Caco-2 (cell line): ENCODE measurements at regions of chr12 and their contacts with region 1.

Region 1: GRCh38 chr12:17928708-17929366 is 161.2 kb downstream of the RERGL start:
- DNase-seq: peak; percentile 33 to 61
- H3K4me3 ChIP-seq: no peak overlapping the region
- H3K4me3 Mint-ChIP-seq: peak overlapping the region; percentile 40
- H3K27ac Mint-ChIP-seq: peak overlapping the region; percentile 41
- H3K4me1 ChIP-seq: peaks cover 18% of the 10 kb centered on the region
- H3K4me1 Mint-ChIP-seq: peaks cover 7% of the 10 kb centered on the region
- H3K27me3 ChIP-seq: no peaks in the 10 kb centered on the region
- H3K27me3 Mint-ChIP-seq: no peaks in the 10 kb centered on the region
- CTCF ChIP-seq: peak; percentile 41 to 47

Region 2: DNA sequence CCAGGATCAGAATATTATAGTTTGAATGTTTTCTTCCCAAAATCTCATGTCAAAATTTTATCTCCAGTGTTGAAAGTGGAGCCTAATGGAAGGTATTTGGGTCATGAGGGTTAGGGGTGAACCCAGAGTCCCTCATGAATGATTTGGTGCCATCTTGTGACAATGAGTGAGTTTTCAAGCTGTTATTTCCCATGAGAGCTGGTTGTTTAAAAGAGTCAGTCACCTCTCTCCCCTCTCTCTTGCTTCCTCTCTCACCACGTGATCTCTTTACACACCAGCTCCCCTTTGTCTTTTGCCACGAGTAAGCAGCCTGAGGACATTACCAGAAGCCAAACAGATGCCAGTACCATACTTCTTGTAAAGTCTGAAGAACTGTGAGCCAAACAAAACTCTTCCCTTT is 400.4 kb before region 1 on chr12:
- CTCF ChIA-PET with region 1: no interaction called
- POLR2A ChIA-PET with region 1: no interaction called
- intact Hi-C with region 1: loop called (anchors 5 kb)
- DNase-seq: no peak
- H3K4me3 ChIP-seq: no peak overlapping the region
- H3K4me3 Mint-ChIP-seq: no peak overlapping the region
- H3K27ac Mint-ChIP-seq: no peak overlapping the region
- H3K4me1 ChIP-seq: no peaks in the 10 kb centered on the region
- H3K4me1 Mint-ChIP-seq: no peaks in the 10 kb centered on the region
- H3K27me3 ChIP-seq: no peaks in the 10 kb centered on the region
- H3K27me3 Mint-ChIP-seq: peaks cover under 1% of the 10 kb centered on the region
- CTCF ChIP-seq: no peak

Region 3: DNA sequence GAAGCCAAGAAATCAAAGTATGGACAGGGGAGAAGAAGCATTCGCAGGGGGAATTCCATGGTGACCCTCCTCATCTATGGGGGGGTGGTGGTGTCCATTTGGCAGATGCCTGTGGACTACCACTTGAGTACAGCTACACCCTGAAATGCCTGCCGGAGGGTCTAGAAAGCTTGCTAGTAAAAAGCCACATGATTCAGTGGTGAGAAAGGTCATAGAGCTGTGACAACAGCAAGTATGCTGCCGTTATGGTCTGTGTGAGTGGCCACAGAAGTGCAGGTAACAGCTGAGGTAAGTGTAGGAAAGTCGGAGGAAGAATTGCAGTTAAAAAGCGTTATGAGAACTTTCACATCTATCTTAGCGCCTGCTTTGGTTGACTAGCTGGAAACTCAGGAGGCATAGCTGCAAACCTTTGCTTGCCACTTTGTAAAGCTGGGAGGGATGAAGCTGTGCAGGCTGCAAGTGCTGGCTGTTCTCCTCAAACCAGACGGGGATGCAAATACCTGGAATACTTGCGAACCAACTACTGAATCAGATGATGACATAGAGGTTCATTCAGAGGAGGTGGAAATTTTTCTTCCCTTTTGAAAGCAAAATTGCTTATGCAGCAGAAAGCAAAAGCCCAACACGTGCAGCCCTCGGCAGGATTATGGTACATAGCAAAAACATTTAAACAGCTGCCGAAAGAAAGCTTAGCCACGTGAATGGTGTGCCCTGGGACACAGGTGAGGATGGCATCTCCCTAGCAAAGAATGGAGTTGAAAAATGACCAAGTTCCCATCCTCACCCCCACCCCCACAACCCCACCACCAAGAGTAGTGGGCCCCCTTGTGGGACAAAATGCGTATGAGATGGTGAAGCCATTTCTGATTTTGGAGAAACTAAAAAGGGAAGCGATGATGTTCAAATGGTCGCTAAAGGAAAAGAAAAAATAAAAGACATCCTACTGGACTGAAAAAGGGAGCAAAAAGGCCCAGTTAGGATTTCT is 125.9 kb before region 1 on chr12:
- CTCF ChIA-PET with region 1: no interaction called
- POLR2A ChIA-PET with region 1: no interaction called
- intact Hi-C with region 1: loop called (anchors 5 kb)
- DNase-seq: peak; percentile 16 to 24
- H3K4me3 ChIP-seq: no peak overlapping the region
- H3K4me3 Mint-ChIP-seq: no peak overlapping the region
- H3K27ac Mint-ChIP-seq: no peak overlapping the region
- H3K4me1 ChIP-seq: no peaks in the 10 kb centered on the region
- H3K4me1 Mint-ChIP-seq: no peaks in the 10 kb centered on the region
- H3K27me3 ChIP-seq: no peaks in the 10 kb centered on the region
- H3K27me3 Mint-ChIP-seq: no peaks in the 10 kb centered on the region
- CTCF ChIP-seq: no peak

Region 4: GRCh38 chr12:17866802-17867201 is 62.0 kb before region 1 on chr12:
- CTCF ChIA-PET with region 1: no interaction called
- POLR2A ChIA-PET with region 1: no interaction called
- intact Hi-C with region 1: no loop called
- DNase-seq: no peak
- H3K4me3 ChIP-seq: no peak overlapping the region
- H3K4me3 Mint-ChIP-seq: no peak overlapping the region
- H3K27ac Mint-ChIP-seq: no peak overlapping the region
- H3K4me1 ChIP-seq: no peaks in the 10 kb centered on the region
- H3K4me1 Mint-ChIP-seq: no peaks in the 10 kb centered on the region
- H3K27me3 ChIP-seq: no peaks in the 10 kb centered on the region
- H3K27me3 Mint-ChIP-seq: peaks cover 10% of the 10 kb centered on the region
- CTCF ChIP-seq: no peak

Region 5: DNA sequence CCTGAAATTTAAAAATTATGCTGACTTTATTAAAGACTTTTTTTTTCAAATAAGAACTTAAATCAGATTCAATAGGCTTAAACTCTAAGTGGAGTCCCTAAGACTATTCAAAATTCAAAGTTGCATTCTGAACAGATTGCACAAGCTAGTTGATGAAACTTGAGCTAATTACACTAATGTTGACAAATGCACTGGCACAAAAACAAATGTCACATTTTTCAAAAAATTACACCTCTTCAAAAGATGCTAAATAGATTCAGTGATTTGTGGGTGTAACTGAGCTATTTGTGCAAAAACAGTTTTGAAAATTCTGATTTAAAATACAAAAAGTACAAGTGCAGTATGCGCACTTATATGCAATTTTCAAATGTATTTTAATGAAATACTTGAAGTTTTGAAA is 44.3 kb before region 1 on chr12:
- CTCF ChIA-PET with region 1: no interaction called
- POLR2A ChIA-PET with region 1: no interaction called
- intact Hi-C with region 1: no loop called
- DNase-seq: no peak
- H3K4me3 ChIP-seq: no peak overlapping the region
- H3K4me3 Mint-ChIP-seq: no peak overlapping the region
- H3K27ac Mint-ChIP-seq: no peak overlapping the region
- H3K4me1 ChIP-seq: no peaks in the 10 kb centered on the region
- H3K4me1 Mint-ChIP-seq: no peaks in the 10 kb centered on the region
- H3K27me3 ChIP-seq: no peaks in the 10 kb centered on the region
- H3K27me3 Mint-ChIP-seq: peaks cover 3% of the 10 kb centered on the region
- CTCF ChIP-seq: no peak

Region 6: GRCh38 chr12:17992002-17992656 is 63.3 kb after region 1 on chr12:
- CTCF ChIA-PET with region 1: no interaction called
- POLR2A ChIA-PET with region 1: no interaction called
- intact Hi-C with region 1: loop called (anchors 2 kb)
- DNase-seq: peak in 1 of 2 experiments; percentile 73
- H3K4me3 ChIP-seq: no peak overlapping the region
- H3K4me3 Mint-ChIP-seq: no peak overlapping the region
- H3K27ac Mint-ChIP-seq: no peak overlapping the region
- H3K4me1 ChIP-seq: no peaks in the 10 kb centered on the region
- H3K4me1 Mint-ChIP-seq: no peaks in the 10 kb centered on the region
- H3K27me3 ChIP-seq: no peaks in the 10 kb centered on the region
- H3K27me3 Mint-ChIP-seq: no peaks in the 10 kb centered on the region
- CTCF ChIP-seq: peak; percentile 89